Activated T-helper 1 cell treated with anti-CD3 and anti-CD28 coated beads, Interleukin-12 subunit alpha, Interleukin-12 subunit beta, Interleukin-2, Interleukin-4 antibody, amounts not matched to agents 30 ng/mL and 10 ng/mL and 1 ng/mL, durations not matched to agents 14 hours and 24 hours and 36 hours (primary cell): ENCODE measurements at regions of chr9 and their contacts with region 1.

Region 1: DNA sequence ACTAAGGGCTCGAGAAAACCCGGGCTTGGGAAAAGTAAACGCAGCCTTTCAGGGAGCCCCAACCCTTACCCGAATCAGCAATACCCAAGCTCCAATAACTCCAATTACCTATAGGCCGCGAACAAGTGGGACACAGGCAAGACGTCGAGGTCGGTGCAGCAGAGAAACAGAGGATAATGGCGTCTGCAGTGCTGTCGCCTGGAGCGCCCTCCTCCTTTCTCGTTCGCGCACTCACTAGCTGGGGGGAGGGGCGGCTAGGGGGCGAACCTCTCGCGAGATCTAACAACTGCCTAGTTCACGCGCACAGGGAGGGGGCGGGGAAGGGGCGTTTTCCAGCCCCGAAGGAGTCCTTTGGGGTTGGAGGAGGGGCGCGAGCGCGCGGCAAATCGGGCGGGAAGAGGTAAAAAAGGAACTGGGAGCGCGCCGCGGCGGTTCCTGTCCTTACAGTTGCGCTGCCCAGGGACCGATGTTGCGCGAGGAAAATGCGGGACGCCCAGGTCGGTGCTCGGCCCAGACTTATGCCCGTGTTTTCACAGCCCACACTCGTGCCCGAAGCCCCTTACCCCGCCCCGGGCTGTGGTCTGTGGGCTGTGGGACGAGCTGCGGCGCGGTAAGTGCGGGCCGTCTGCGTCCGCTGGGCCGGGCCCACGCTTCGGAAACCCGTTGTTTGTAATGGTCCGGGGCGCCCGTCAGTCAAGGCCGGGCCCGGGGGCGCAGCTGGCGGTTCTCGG is at the start of gene RMI1:
- DNase-seq: peak; percentile 96
- H3K4me3 Mint-ChIP-seq: peak within 1 kb of the TSS; percentile 95
- H3K27ac Mint-ChIP-seq: peak within 1 kb of the TSS; percentile 100
- H3K4me1 Mint-ChIP-seq: peaks cover 51% of the 10 kb centered on the region
- H3K27me3 Mint-ChIP-seq: peaks cover 2% of the 10 kb centered on the region
- total RNA-seq, gene RMI1: 25.6 and 27.4 TPM in 2 replicates

Region 2: GRCh38 chr9:83622939-83623678 is 357.5 kb before region 1 on chr9 and contains the start of gene IDNK:
- intact Hi-C with region 1: loop called (anchors 2 kb)
- DNase-seq: peak; percentile 60
- H3K4me3 Mint-ChIP-seq: peak within 1 kb of the TSS; percentile 91
- H3K27ac Mint-ChIP-seq: peak within 1 kb of the TSS; percentile 97
- H3K4me1 Mint-ChIP-seq: peaks cover 44% of the 10 kb centered on the region
- H3K27me3 Mint-ChIP-seq: peaks cover 10% of the 10 kb centered on the region
- total RNA-seq, gene IDNK: 4.5 and 6.3 TPM in 2 replicates

Region 3: DNA sequence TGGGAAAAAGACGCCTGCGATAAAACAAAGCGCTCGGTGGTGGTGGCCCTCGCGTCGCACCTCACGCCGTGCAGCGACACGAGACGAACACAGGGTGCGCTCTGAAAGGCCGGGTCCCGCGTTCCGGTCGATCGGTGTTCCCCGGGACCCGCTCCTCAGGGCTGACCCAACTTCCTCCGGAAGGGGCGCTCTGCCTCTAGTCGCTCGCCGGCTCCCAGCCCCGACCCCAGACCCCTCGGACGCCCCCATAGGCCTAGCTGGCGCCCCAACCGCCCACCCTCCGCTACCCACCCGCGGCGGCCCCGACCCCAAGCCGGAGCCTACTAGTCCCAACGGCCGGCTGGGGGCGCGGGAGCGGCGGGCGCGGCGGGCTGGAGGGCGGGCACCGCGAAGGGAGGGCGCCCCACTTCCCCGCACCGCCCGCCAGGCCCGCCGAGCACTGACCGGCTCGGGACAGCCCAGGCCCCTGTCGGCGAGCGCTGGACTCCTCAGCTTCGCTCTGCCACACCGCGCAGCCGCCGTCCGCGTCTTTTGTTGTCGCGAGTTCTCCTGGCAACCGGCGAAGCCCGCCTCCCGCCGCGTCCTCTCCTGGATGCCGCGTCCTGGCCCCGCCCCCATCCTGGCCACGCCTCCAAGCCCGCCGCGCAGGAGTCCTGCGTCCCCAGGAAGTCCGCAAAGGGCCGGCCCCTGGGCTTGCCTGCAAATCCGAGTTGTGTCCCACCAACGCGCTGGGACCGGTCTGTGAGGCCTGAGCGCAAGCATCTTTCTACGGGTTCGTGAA is 59.4 kb before region 1 on chr9 and contains the start of gene KIF27:
- intact Hi-C with region 1: loop called (anchors 1 kb)
- DNase-seq: peak; percentile 98
- H3K4me3 Mint-ChIP-seq: peak within 1 kb of the TSS; percentile 85
- H3K27ac Mint-ChIP-seq: peak within 1 kb of the TSS; percentile 91
- H3K4me1 Mint-ChIP-seq: peaks cover 17% of the 10 kb centered on the region
- H3K27me3 Mint-ChIP-seq: no peaks in the 10 kb centered on the region
- total RNA-seq, gene KIF27: 2.9 TPM in 2 replicates

Region 4: GRCh38 chr9:83965350-83966208 is 15.0 kb before region 1 on chr9:
- intact Hi-C with region 1: loop called (anchors 1 kb)
- DNase-seq: no peak
- H3K4me3 Mint-ChIP-seq: no peak overlapping the region
- H3K27ac Mint-ChIP-seq: peak overlapping the region; percentile 72
- H3K4me1 Mint-ChIP-seq: peaks cover 17% of the 10 kb centered on the region
- H3K27me3 Mint-ChIP-seq: no peaks in the 10 kb centered on the region

Region 5: GRCh38 chr9:83992421-83992820 is 11.9 kb after region 1 on chr9:
- intact Hi-C with region 1: no loop called
- DNase-seq: no peak
- H3K4me3 Mint-ChIP-seq: no peak overlapping the region
- H3K27ac Mint-ChIP-seq: no peak overlapping the region
- H3K4me1 Mint-ChIP-seq: peaks cover 41% of the 10 kb centered on the region
- H3K27me3 Mint-ChIP-seq: no peaks in the 10 kb centered on the region

Region 6: GRCh38 chr9:84296146-84296843 is 315.7 kb after region 1 on chr9:
- intact Hi-C with region 1: loop called (anchors 2 kb)
- DNase-seq: peak; percentile 61
- H3K4me3 Mint-ChIP-seq: peak overlapping the region; percentile 66
- H3K27ac Mint-ChIP-seq: peak overlapping the region; percentile 100
- H3K4me1 Mint-ChIP-seq: peaks cover 83% of the 10 kb centered on the region
- H3K27me3 Mint-ChIP-seq: no peaks in the 10 kb centered on the region

Region 7: GRCh38 chr9:84759300-84759750 is 778.8 kb after region 1 on chr9:
- intact Hi-C with region 1: loop called (anchors 5 kb)
- DNase-seq: peak; percentile 49
- H3K4me3 Mint-ChIP-seq: peak overlapping the region; percentile 59
- H3K27ac Mint-ChIP-seq: peak overlapping the region; percentile 83
- H3K4me1 Mint-ChIP-seq: peaks cover 55% of the 10 kb centered on the region
- H3K27me3 Mint-ChIP-seq: no peaks in the 10 kb centered on the region